Mucosa of descending colon (tissue), 3 donors: ENCODE measurements at regions of chr9 and their contacts with region 1.

Region 1: GRCh38 chr9:93962561-93963440 is 7.6 kb upstream of the BARX1 start:
- DNase-seq: peak; percentile 72 to 89 (median 79)
- ATAC-seq: peak; percentile 88
- H3K4me3 ChIP-seq: no peak overlapping the region
- H3K4me1 ChIP-seq: peaks cover 14% of the 10 kb centered on the region
- CTCF ChIP-seq: peak; percentile 54

Region 2: GRCh38 chr9:93682232-93682968 is 280.4 kb before region 1 on chr9:
- intact Hi-C with region 1: loop called (anchors 2 to 5 kb)
- DNase-seq: peak in 2 of 3 donors; percentile 79 to 82
- ATAC-seq: peak; percentile 75
- H3K4me3 ChIP-seq: no peak overlapping the region
- H3K4me1 ChIP-seq: no peaks in the 10 kb centered on the region
- CTCF ChIP-seq: peak; percentile 60